Left colon (tissue), 2 donors: ENCODE measurements at regions of chr12 and their contacts with region 1.

Region 1: DNA sequence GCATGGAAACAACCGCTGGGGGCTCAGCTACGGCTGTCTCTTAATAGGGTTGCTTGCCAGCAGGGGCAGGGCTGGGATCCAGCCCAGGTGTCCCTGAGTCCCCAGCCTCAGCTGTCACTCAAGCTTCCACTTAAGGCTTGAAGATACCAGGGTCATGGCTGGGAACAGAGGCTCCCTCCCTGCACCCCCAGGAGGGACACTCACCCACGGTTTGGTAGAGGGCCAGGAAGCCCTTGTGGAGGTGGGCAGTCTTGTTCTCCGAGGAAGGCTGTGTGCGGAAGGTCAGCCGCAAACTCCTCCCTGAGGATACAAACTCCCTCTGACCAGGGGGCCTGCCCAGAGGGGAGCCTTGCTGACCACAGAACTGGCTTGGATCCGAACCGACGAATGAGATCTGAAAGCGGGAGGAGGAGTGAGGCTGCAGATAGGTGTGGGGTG is 7.3 kb downstream of the C1RL start:
- DNase-seq: peak in 1 of 2 donors; percentile 14
- ATAC-seq: no peak

Region 2: GRCh38 chr12:7060353-7060954 is 41.3 kb before region 1 on chr12 and contains the start of gene C1S:
- intact Hi-C with region 1: loop called in 1 of 2 experiments (anchors 5 kb)
- DNase-seq: peak; percentile 12 to 57
- ATAC-seq: peak; percentile 58
- total RNA-seq, gene C1S: 54.9 to 109 TPM